B cell (primary cell): ENCODE measurements at regions of chr5 and their contacts with region 1.

Region 1: DNA sequence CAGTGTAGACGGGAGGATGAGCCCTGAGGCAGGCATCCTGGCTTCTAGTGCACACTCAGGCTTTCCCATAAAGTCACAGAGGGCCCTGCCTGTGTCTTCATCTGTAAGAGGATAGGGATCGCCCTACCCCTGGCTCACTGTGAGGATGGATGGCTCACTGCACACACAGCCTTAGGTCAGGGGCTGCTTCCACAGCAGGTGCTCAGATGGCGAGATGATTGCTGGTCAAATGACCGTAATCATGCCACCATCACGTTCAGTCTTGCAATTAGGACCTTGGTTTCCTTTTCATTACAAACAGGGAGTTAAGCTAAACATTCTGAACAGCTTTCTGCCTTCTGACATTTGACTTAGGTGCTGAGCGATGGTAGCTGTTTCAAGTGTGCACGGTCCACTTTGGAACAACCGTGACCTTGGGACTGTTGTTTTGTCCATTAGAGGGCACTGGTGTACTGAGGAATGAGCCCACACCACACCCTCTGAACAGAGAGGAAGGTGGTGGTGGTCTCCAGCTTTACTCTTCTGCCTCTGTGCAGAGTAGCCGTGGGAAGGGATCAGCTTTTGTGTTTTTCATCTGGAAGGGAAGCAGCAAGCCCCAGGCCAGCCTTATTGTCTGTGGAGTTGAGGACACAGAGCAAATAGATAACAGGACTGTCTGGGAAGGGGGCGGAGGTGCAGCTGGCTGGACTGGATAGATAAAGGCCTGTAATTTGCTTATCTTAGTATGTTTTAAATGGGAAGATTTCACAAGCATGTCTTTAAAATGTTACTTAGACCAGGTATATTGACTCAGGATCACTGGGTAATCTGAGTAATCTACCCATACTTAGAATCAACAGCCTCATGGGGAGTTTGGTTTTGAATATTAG is 183.1 kb downstream of the TRIO start:
- DNase-seq: peak; percentile 43
- ATAC-seq: peak; percentile 62
- H3K4me3 ChIP-seq: no peak overlapping the region
- H3K4me3 Mint-ChIP-seq: no peak overlapping the region
- H3K27ac ChIP-seq: no peak overlapping the region
- H3K27ac Mint-ChIP-seq: peak overlapping the region; percentile 11
- H3K4me1 ChIP-seq: peaks cover 29 to 32% of the 10 kb centered on the region in 2 donors
- H3K4me1 Mint-ChIP-seq: peaks cover 37% of the 10 kb centered on the region
- H3K27me3 ChIP-seq: no peaks in the 10 kb centered on the region
- H3K27me3 Mint-ChIP-seq: no peaks in the 10 kb centered on the region
- CTCF ChIP-seq: peak; percentile 36

Region 2: DNA sequence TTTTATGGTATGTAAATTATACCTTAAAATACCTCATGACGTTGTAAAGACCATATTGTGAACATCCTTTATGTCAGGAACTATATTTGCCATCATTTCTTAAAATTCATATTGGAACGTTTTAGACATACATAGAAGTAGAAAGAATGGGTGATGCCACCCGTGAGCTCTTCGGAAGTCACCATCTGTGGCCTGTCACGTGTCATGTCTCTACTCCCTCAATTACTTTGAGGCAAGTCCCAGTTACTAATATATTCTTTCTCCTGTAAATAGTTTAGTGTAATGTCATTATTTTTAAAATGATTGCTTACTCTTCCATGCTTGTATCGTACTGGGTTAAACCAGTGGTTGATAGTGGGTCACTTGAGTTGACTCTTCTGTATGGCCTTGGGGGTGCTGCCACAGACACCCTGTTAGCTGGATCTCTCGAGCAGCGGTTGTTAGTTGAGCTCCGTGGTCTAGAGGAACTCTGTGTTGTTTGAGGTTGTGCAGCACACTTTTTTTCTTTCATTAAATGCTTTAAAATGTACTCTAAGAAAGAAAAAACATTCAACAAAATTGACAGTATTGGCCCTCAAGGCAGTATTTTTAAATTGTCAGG is 116.9 kb before region 1 on chr5:
- CTCF ChIA-PET with region 1: no interaction called
- POLR2A ChIA-PET with region 1: no interaction called
- intact Hi-C with region 1: no loop called
- DNase-seq: peak; percentile 42
- ATAC-seq: no peak
- H3K4me3 ChIP-seq: peak overlapping the region in 1 of 5 experiments; percentile 0
- H3K4me3 Mint-ChIP-seq: peak overlapping the region; percentile 74
- H3K27ac ChIP-seq: peak overlapping the region; percentile 80 to 94
- H3K27ac Mint-ChIP-seq: peak overlapping the region; percentile 93
- H3K4me1 ChIP-seq: peaks cover 84 to 88% of the 10 kb centered on the region in 2 donors
- H3K4me1 Mint-ChIP-seq: peaks cover 86% of the 10 kb centered on the region
- H3K27me3 ChIP-seq: no peaks in the 10 kb centered on the region
- H3K27me3 Mint-ChIP-seq: no peaks in the 10 kb centered on the region
- CTCF ChIP-seq: no peak

Region 3: GRCh38 chr5:14351845-14352712 is 25.8 kb after region 1 on chr5:
- CTCF ChIA-PET with region 1: interaction called, 32 read pairs
- POLR2A ChIA-PET with region 1: no interaction called
- intact Hi-C with region 1: no loop called
- DNase-seq: peak; percentile 72
- ATAC-seq: peak; percentile 93
- H3K4me3 ChIP-seq: no peak overlapping the region
- H3K4me3 Mint-ChIP-seq: no peak overlapping the region
- H3K27ac ChIP-seq: no peak overlapping the region
- H3K27ac Mint-ChIP-seq: peak overlapping the region; percentile 68
- H3K4me1 ChIP-seq: peaks cover 9 to 21% of the 10 kb centered on the region in 2 donors
- H3K4me1 Mint-ChIP-seq: peaks cover 32% of the 10 kb centered on the region
- H3K27me3 ChIP-seq: no peaks in the 10 kb centered on the region
- H3K27me3 Mint-ChIP-seq: no peaks in the 10 kb centered on the region
- CTCF ChIP-seq: peak; percentile 96

Region 4: GRCh38 chr5:14399054-14399692 is 72.9 kb after region 1 on chr5:
- CTCF ChIA-PET with region 1: interaction called, 10 read pairs
- POLR2A ChIA-PET with region 1: no interaction called
- intact Hi-C with region 1: no loop called
- DNase-seq: peak; percentile 39
- ATAC-seq: no peak
- H3K4me3 ChIP-seq: no peak overlapping the region
- H3K4me3 Mint-ChIP-seq: no peak overlapping the region
- H3K27ac ChIP-seq: no peak overlapping the region
- H3K27ac Mint-ChIP-seq: no peak overlapping the region
- H3K4me1 ChIP-seq: no peaks in the 10 kb centered on the region
- H3K4me1 Mint-ChIP-seq: no peaks in the 10 kb centered on the region
- H3K27me3 ChIP-seq: no peaks in the 10 kb centered on the region
- H3K27me3 Mint-ChIP-seq: no peaks in the 10 kb centered on the region
- CTCF ChIP-seq: peak; percentile 70